ENCODE measurements at regions of chr3 and their contacts with region 1.

Region 1: GRCh38 chr3:133426721-133427120 is 26.9 kb downstream of the BFSP2 start:
- DNase-seq: no peak
- H3K4me3 Mint-ChIP-seq: no peak overlapping the region
- H3K27ac Mint-ChIP-seq: no peak overlapping the region
- H3K4me1 Mint-ChIP-seq: peaks cover 9% of the 10 kb centered on the region
- H3K27me3 Mint-ChIP-seq: peaks cover 8% of the 10 kb centered on the region

Region 2: DNA sequence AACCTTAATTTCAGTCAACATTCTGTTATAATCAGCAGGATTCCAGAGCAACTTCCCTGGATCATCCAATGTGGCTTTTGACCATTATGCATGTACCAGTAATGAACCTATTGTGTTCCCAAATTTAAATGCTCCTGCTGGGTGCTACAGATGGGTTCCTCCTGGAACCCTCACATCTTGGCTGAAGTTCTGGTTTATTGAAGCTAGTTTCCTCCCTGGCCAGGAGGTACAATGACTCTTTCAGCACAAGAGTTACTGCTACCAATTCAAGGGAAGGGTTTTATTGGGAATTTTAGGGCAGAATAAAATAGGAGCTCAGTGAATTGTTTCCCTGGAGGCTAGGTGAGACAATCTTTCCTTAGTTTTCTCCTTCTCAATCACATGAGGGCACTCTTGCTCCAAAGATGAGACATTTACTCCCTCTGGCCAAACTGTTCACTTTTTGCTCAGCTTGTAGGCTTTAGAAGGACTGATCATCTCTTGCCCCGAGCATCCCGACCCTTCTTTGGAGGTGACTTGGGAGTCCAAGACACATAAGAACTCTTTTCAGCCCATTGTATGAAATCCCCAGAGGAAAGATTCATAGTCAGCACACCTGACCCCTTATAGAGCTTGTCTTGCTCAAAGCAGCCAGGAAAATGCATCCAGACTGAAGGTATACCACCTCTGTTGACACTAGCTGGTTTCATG is 695.7 kb before region 1 on chr3:
- intact Hi-C with region 1: loop called (anchors 1 kb)
- DNase-seq: no peak
- H3K4me3 Mint-ChIP-seq: no peak overlapping the region
- H3K27ac Mint-ChIP-seq: no peak overlapping the region
- H3K4me1 Mint-ChIP-seq: no peaks in the 10 kb centered on the region
- H3K27me3 Mint-ChIP-seq: peaks cover 50% of the 10 kb centered on the region

Region 3: DNA sequence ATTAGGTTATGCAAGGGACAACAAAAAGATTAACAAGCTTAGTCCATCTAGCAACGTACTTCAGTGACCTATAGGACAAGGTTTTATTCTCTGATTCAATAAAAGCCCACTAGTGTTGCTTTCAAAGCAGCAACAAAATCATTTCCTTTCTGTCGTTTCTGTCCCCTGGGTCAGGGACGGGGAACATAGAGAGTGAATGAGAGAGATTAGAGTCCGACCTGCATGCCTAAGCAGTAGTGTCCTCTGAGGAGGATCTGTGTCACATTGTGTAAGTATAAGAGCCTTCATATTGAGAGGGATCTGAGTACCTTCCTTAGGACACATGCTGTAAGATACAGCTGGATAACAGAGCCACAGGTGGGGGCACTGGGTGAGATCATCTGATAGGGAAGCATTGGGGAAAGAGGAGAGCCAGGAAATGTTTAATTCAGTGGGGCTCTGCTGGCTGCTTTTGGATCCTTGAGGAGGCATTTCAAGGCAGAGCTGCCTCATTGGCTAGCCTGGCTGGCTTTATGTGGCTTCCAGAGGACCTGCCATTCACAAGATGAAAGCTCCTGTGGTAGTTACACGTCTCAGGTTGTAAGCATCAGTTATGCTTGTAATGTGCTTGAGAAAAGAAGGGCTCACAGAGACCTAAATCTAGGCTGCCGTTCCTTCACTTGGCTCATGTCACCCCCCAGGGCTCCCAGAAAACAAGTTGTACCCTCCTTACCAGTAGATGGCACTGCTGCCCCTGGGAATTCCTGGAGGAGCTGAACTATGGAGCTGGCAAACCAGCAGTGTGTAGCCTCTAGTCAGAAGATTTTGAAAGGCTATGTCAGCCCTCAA is 385.8 kb before region 1 on chr3:
- intact Hi-C with region 1: loop called (anchors 2 kb)
- DNase-seq: no peak
- H3K4me3 Mint-ChIP-seq: no peak overlapping the region
- H3K27ac Mint-ChIP-seq: no peak overlapping the region
- H3K4me1 Mint-ChIP-seq: peaks cover 5% of the 10 kb centered on the region
- H3K27me3 Mint-ChIP-seq: peaks cover 43% of the 10 kb centered on the region

Measured in activated T-helper 1 cell treated with anti-CD3 and anti-CD28 coated beads, Interleukin-12 subunit alpha, Interleukin-12 subunit beta, Interleukin-2, Interleukin-4 antibody, amounts not matched to agents 30 ng/mL and 10 ng/mL and 1 ng/mL, durations not matched to agents 14 hours and 24 hours and 36 hours (primary cell).